K562 (cell line): ENCODE measurements at regions of chrX and their contacts with region 1.

Region 1: GRCh38 chrX:39730662-39731397 is 366.9 kb downstream of the BCOR start:
- DNase-seq: peak; percentile 67 to 77 (median 70)
- ATAC-seq: peak; percentile 95
- H3K4me3 ChIP-seq: peak overlapping the region; percentile 16; the same call in 1 of the 2 replicates
- H3K27ac ChIP-seq: peak overlapping the region; percentile 28; the same call in 1 of the 3 replicates
- H3K4me1 ChIP-seq: peaks cover 8 to 9% of the 10 kb centered on the region in 2 experiments; a peak in 4 of 5 replicates
- H3K27me3 ChIP-seq: no peaks in the 10 kb centered on the region
- CTCF ChIP-seq: peak; percentile 65 to 75 (median 73)
- EP300 ChIP-seq: no peak
- POLR2A ChIP-seq: no peak
- RAD21 ChIP-seq: peak; percentile 79 to 80

Region 2: GRCh38 chrX:39652336-39653131 is 78.3 kb before region 1 on chrX:
- CTCF ChIA-PET with region 1: no interaction called
- POLR2A ChIA-PET with region 1: no interaction called
- in situ Hi-C with region 1: no loop called
- intact Hi-C with region 1: loop called (anchors 10 kb)
- DNase-seq: peak; percentile 32 to 59 (median 38)
- ATAC-seq: peak; percentile 83
- H3K4me3 ChIP-seq: no peak overlapping the region
- H3K27ac ChIP-seq: no peak overlapping the region
- H3K4me1 ChIP-seq: no peaks in the 10 kb centered on the region; a peak in 1 of 5 replicates
- H3K27me3 ChIP-seq: peaks cover 0 to 4% of the 10 kb centered on the region in 2 experiments; a peak in 1 of 5 replicates
- CTCF ChIP-seq: peak; percentile 61 to 67 (median 63)
- EP300 ChIP-seq: no peak
- POLR2A ChIP-seq: no peak
- RAD21 ChIP-seq: peak; percentile 70 to 72

Region 3: DNA sequence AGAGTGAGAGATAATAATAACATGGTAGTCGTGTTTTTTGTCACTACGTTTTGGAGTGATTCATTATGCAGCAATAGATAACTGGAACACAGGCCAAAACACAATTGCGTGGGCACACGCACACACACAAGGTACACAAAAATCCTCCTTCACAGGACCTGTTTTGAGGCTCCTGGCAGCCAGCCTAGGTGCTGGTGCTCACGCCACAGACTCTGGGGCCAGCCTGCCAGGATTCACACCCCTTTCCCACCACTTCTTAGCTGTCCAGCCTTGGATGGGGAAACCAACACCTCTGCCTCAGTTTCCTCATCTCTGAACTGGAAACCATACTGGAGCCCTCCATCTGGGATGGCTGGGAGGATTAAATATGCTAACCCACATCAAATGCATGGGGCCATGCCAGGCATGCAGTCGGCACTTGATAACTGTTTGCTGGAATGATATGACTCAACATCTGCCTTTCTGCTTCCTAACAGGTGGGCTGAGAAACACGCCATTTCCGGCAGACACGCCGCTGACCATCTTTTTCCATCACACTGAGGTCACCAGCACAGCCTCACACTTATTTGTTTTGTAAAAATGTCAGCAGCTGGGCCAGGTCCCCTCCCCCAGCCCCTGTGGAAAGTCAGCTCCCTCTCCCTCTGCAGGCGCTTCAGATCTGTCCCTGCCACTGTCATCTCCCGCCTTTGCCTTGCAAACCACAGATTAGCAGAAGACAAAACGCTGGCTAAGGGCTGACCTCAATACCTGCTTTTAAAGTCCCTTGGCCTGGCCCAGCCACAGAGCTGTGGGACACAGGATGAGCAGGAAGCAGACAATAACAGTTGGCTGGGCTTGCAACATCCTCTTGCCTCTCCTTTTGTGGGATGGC is 129.4 kb after region 1 on chrX:
- CTCF ChIA-PET with region 1: no interaction called
- POLR2A ChIA-PET with region 1: no interaction called
- in situ Hi-C with region 1: no loop called
- intact Hi-C with region 1: loop called (anchors 10 kb)
- DNase-seq: peak; percentile 43 to 76 (median 58)
- ATAC-seq: peak; percentile 78
- H3K4me3 ChIP-seq: no peak overlapping the region
- H3K27ac ChIP-seq: peak overlapping the region; percentile 77
- H3K4me1 ChIP-seq: peaks cover 22 to 39% of the 10 kb centered on the region in 2 experiments
- H3K27me3 ChIP-seq: no peaks in the 10 kb centered on the region
- CTCF ChIP-seq: no peak
- EP300 ChIP-seq: peak; percentile 42; the same call in 1 of the 2 replicates
- POLR2A ChIP-seq: no peak
- RAD21 ChIP-seq: peak in 1 of 2 experiments; percentile 35; a peak in 2 of 4 replicates